ENCODE measurements at regions of chr3 and their contacts with region 1.

Region 1: DNA sequence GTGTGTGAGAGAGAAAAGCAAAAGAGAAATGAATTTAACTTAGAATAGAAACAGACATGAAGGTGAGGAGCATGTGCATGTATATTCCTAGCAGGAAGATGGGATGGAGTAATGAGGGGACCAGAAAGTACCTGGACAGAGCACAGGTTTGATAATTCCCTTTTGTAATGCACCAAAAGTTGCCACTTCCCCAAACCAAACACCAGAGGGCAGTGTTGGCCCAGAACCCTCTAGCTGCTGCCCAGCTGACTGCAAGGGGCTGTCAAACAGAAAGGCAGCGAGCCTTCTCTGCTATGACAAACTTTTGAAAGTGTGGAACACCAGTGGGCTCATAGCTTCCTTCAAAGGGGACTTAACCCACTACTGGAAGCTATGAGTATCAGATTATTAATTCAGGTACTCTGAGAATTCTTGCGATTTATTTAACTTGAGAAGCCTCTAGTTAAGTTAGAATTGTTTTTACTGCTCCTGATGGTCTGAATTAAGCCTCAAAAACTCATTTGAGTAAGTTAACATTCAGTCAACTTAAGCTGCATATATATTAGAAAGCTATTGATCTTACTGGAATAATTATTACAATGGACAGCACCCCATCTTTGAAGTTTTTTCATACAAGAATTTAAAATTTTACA is 234.9 kb downstream of the NEK10 start:
- DNase-seq: peak; percentile 57
- H3K4me3 ChIP-seq: no peak overlapping the region
- H3K27ac ChIP-seq: no peak overlapping the region
- H3K4me1 ChIP-seq: no peaks in the 10 kb centered on the region
- H3K27me3 ChIP-seq: no peaks in the 10 kb centered on the region
- CTCF ChIP-seq: peak; percentile 92
- EP300 ChIP-seq: no peak
- RAD21 ChIP-seq: peak; percentile 93

Region 2: DNA sequence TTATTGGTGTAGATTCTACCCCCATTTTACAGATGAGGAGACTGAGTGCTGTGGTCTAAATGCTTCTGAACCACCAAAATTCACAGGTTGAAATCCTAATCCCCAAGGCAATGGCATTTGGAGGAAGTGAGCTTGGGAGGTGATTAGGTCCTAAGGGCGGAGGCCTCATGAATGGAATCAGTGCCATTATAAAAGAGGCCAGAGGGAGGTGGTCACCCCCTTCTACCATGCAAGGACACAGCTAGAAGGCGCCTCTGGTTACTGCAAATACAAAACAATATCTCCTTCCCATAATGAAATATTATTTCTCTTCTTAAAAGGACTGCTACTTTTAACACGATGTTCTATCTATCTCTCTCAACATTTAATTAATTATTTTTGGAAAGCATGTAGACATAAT is 11.4 kb after region 1 on chr3:
- CTCF ChIA-PET with region 1: interaction called, 40 read pairs
- POLR2A ChIA-PET with region 1: no interaction called
- DNase-seq: no peak
- H3K4me3 ChIP-seq: no peak overlapping the region
- H3K27ac ChIP-seq: no peak overlapping the region
- H3K4me1 ChIP-seq: no peaks in the 10 kb centered on the region
- H3K27me3 ChIP-seq: no peaks in the 10 kb centered on the region
- CTCF ChIP-seq: no peak
- EP300 ChIP-seq: no peak
- RAD21 ChIP-seq: no peak

Region 3: DNA sequence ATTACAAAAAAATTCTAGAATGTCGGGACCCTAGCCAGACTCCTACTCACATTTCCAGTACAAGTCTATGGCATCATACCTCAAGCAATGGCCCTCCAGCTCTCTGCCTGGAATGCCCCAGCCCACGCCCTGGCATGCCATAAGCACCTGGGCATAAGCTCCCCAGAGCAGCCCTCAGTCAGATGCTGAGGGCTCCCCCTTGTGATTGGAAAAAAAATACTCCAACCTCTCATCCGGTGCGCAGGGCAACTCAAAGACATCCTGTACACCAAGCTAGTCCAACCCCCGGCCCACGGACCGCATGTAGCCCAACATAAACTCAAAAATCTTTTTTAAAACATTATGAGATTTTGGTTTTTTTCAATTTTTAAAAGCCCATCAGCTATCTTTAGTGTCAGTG is 119.5 kb after region 1 on chr3:
- CTCF ChIA-PET with region 1: interaction called, 49 read pairs
- POLR2A ChIA-PET with region 1: no interaction called
- DNase-seq: peak; percentile 40
- H3K4me3 ChIP-seq: no peak overlapping the region
- H3K27ac ChIP-seq: no peak overlapping the region
- H3K4me1 ChIP-seq: no peaks in the 10 kb centered on the region
- H3K27me3 ChIP-seq: no peaks in the 10 kb centered on the region
- CTCF ChIP-seq: peak; percentile 58
- EP300 ChIP-seq: no peak
- RAD21 ChIP-seq: peak; percentile 76

Region 4: GRCh38 chr3:27279123-27279522 is 144.8 kb after region 1 on chr3:
- CTCF ChIA-PET with region 1: interaction called, 20 read pairs
- POLR2A ChIA-PET with region 1: no interaction called
- DNase-seq: peak; percentile 38
- H3K4me3 ChIP-seq: no peak overlapping the region
- H3K27ac ChIP-seq: no peak overlapping the region
- H3K4me1 ChIP-seq: no peaks in the 10 kb centered on the region
- H3K27me3 ChIP-seq: no peaks in the 10 kb centered on the region
- CTCF ChIP-seq: peak; percentile 50
- EP300 ChIP-seq: no peak
- RAD21 ChIP-seq: peak; percentile 71